Cardiac septum (tissue), 1 donor: ENCODE measurements at regions of chr12 and their contacts with region 1.

Region 1: GRCh38 chr12:119375075-119375882 is 40.8 kb downstream of the CCDC60 start:
- DNase-seq: no peak

Region 2: GRCh38 chr12:119258149-119258548 is 117.1 kb before region 1 on chr12:
- intact Hi-C with region 1: loop called (anchors 10 kb)
- DNase-seq: no peak